Lower leg skin (tissue), 4 donors: ENCODE measurements at regions of chr18 and their contacts with region 1.

Region 1: GRCh38 chr18:32158108-32158624 is 31.7 kb upstream of the MEP1B start:
- DNase-seq: peak; percentile 73 to 91
- H3K4me3 ChIP-seq: no peak overlapping the region
- CTCF ChIP-seq: peak in 1 of 3 donors; percentile 75
- POLR2A ChIP-seq: no peak

Region 2: DNA sequence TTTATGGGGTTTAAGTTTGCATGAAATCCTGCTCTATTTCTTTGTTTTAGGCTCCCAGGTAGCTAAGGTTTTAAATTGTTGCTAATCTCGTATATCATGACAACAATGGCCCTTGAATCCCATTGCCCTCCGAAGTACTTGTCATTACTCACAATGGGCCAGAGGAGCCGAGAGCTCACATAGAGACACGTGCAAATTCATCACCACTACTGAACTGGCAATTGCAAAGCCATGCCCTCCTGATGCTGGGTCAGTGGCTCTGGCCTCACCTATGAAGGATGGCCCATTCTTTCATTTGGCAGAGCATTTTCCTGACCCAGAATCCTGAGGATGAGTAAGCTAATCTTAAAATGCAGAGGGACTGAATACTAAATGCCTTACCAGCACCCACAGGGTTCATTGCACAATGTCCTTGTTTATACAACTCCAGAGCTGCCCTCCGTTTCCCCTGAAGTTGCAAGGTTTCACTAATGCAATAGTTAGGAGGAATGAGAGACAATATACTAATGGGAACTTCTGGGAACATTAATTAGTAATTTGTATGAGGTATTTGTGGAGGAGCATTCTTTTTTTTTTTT is 384.1 kb after region 1 on chr18:
- intact Hi-C with region 1: no loop called
- DNase-seq: no peak
- H3K4me3 ChIP-seq: no peak overlapping the region
- CTCF ChIP-seq: no peak
- POLR2A ChIP-seq: no peak

Region 3: DNA sequence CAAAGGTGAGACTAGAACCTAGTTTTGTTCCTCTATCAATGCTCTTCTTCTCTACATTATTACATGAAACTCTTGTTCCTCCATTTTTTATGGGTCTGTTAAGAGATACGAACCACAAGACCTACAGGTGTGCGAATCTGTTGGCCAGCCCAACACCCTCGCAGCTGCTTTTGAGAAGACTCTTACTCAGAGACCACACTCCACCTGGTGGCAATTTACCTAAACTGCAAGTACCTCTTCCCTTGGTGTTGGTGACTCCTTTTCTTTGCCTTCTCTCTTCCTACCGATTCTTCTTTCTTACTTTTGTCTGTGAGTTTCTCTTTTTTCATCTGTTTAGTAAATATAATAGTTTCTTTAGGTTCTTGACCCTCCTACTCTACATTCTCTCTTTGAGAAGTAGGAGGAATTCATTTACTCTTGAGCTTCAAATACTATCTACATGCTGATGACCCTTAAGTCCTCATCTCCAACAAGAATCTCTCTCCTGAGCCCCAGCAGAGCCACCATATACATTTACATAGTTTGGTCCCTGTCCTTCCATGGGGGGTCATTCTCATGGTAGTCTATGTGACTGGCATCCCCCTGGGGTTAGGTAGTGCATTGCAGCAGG is 394.4 kb after region 1 on chr18:
- intact Hi-C with region 1: loop called (anchors 2 kb)
- DNase-seq: peak in 1 of 2 donors; percentile 63
- H3K4me3 ChIP-seq: no peak overlapping the region
- CTCF ChIP-seq: peak in 1 of 3 donors; percentile 48
- POLR2A ChIP-seq: no peak